ENCODE measurements at regions of chr4 and their contacts with region 1.

Region 1: GRCh38 chr4:69881173-69881773 is 21.3 kb upstream of the SULT1E1 start:
- DNase-seq: peak; percentile 61
- H3K4me3 ChIP-seq: no peak overlapping the region
- H3K27ac ChIP-seq: peak overlapping the region; percentile 17
- H3K4me1 ChIP-seq: peaks cover 6% of the 10 kb centered on the region
- H3K27me3 ChIP-seq: no peaks in the 10 kb centered on the region
- CTCF ChIP-seq: peak; percentile 70 to 81
- POLR2A ChIP-seq: no peak

Region 2: GRCh38 chr4:69701696-69702095 is 179.6 kb before region 1 on chr4:
- CTCF ChIA-PET with region 1: interaction called, 10 read pairs
- POLR2A ChIA-PET with region 1: no interaction called
- dilution Hi-C with region 1: no loop called
- intact Hi-C with region 1: no loop called
- DNase-seq: no peak
- H3K4me3 ChIP-seq: no peak overlapping the region
- H3K27ac ChIP-seq: no peak overlapping the region
- H3K4me1 ChIP-seq: no peaks in the 10 kb centered on the region
- H3K27me3 ChIP-seq: no peaks in the 10 kb centered on the region
- CTCF ChIP-seq: no peak
- POLR2A ChIP-seq: no peak

Region 3: GRCh38 chr4:69773484-69773883 is 107.8 kb before region 1 on chr4:
- CTCF ChIA-PET with region 1: no interaction called
- POLR2A ChIA-PET with region 1: no interaction called
- dilution Hi-C with region 1: no loop called
- intact Hi-C with region 1: loop called (anchors 2 kb)
- DNase-seq: peak; percentile 97
- H3K4me3 ChIP-seq: no peak overlapping the region
- H3K27ac ChIP-seq: peak overlapping the region; percentile 95
- H3K4me1 ChIP-seq: peaks cover 22% of the 10 kb centered on the region
- H3K27me3 ChIP-seq: no peaks in the 10 kb centered on the region
- CTCF ChIP-seq: no peak
- POLR2A ChIP-seq: no peak

Region 4: DNA sequence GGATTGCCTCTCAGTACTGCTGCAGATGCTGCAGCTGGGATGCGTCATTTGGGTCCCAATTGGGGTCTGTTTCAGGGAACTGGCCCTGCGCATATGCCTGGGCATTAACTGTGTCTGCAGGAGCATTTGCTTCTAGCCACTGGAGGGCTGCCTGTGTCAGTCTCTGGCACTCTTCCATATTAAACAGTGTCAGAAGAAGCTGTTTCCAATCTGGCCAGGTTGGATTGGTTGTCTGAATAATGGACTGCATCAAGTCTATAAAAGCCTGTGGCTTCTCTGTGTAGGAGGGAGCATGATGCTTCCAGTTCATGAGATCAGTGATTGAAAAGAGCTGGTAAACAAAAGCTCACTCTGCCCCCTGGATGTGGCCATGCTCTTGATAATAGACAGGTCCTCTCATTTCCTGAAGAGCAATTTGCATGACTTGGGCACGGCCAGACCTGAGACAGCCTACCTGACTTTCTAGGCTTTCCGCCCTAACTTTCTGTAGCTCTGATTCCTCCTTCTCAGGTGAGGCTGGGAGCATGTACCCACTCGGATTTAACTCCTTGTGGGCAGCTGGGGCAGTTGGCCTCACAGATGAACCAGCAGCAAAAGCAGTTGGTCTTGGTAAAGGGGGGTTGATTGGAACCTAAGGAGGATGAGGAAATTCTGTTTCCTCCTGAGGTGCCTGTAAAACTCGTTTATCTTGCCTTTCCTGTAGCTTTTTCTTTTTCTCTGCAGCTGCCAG is 50.5 kb before region 1 on chr4:
- CTCF ChIA-PET with region 1: interaction called, 11 read pairs
- POLR2A ChIA-PET with region 1: no interaction called
- dilution Hi-C with region 1: no loop called
- intact Hi-C with region 1: no loop called
- DNase-seq: peak; percentile 64
- H3K4me3 ChIP-seq: no peak overlapping the region
- H3K27ac ChIP-seq: no peak overlapping the region
- H3K4me1 ChIP-seq: peaks cover 4% of the 10 kb centered on the region
- H3K27me3 ChIP-seq: no peaks in the 10 kb centered on the region
- CTCF ChIP-seq: peak in 1 of 2 donors; percentile 4
- POLR2A ChIP-seq: no peak

Region 5: DNA sequence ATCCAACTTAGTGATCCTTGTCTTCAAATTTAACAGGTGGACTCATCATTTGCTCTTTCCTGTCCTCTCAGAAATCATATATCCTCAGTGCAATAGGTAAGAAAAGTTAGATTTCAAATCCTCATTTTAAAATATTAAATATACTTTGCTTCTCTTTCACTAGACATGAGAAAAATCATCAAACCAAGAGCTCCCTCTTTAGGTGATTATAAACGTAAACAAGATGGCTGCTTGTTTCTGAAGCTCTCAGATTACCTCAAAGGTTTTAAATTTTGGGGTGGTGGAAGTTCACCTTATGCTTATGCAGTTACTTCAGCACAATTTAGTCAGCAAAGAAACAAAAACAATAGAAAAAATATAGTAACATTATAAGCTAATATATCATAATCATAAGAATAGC is 388.4 kb after region 1 on chr4:
- CTCF ChIA-PET with region 1: interaction called, 10 read pairs
- POLR2A ChIA-PET with region 1: no interaction called
- dilution Hi-C with region 1: no loop called
- intact Hi-C with region 1: no loop called
- DNase-seq: peak; percentile 10
- H3K4me3 ChIP-seq: no peak overlapping the region
- H3K27ac ChIP-seq: no peak overlapping the region
- H3K4me1 ChIP-seq: no peaks in the 10 kb centered on the region
- H3K27me3 ChIP-seq: no peaks in the 10 kb centered on the region
- CTCF ChIP-seq: peak in 1 of 2 donors; percentile 7
- POLR2A ChIP-seq: no peak